ENCODE measurements at regions of chr20 and their contacts with region 1.

Region 1: DNA sequence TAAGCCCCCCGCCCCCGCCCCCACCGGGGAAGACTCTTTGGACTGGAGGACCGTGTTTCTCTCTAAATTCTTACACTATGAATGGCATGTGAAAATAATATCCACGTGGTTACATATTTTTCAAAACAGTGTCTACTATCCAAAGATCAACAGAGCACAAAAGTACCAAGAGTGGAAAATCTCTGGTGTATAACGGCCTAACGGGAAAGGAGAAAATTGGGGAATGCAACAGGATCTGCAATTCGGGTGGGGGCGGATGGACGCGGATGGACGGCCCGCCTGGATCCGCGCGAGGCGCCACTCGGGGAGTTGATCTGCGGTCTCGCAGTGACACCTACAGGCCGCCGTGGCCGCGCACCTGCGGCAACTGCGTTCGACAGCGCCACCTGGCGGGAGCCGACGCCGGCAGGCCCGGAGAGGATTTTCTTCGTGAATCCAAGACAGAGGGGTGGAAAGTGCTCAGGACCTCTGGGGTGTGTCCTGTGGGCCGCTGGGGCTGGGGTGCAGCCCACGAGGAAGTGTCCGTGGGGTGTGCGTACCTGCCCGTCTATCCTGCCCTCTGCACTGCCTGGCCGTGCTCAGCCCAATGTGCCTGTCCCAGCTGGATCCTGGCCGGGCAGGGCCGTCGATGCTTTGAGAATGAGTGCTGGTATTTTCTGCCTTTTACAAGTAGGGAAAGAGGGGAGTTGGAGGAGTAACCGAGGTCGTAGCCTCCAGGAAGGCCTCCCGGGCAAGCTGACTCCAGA is 18.6 kb downstream of the ANKRD60 start:
- DNase-seq: peak; percentile 60 to 99 (median 86)
- ATAC-seq: peak; percentile 88 to 99 (median 95)
- H3K4me3 ChIP-seq: no peak overlapping the region
- H3K27ac ChIP-seq: no peak overlapping the region
- H3K4me1 ChIP-seq: no peaks in the 10 kb centered on the region
- H3K27me3 ChIP-seq: no peaks in the 10 kb centered on the region
- CTCF ChIP-seq: peak; percentile 100

Region 2: DNA sequence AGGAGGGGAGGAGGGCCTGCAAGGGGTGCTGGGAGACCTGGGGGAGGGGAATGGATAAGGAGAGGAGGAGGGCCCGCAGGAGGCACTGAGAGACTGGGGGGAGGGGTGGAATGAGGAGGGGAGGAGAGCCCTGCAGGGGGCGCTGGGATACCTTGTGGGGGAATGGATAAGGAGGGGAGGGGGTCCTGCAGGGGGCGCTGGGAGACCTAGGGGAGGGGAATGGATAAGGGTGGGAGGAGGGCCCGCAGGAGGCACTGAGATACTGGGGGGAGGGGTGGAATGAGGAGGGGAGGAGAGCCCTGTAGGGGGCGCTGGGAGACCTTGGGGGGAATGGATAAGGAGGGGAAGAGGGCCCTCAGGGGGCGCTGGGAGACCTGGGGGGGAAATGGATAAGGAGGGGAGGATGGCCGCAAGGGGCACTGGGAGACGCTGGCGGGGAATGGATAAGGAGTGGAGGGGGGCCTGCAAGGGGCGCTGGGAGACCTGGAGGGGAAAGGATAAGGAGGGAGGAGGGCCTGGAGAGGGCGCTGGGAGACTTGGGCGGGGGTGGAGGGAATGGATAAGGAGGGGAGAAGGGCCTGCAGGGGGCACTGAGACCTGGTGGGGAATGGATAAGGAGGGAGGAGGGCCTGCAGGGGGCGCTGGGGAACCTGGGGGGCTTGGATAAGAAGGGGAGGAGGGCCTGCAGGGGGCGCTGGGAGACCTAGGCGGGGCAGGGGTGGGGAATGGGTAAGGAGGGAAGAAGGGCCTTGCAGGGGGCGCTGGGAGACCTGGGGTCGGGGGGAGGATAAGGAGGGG is 683.5 kb before region 1 on chr20:
- intact Hi-C with region 1: loop called in 2 of 3 experiments (anchors 10 kb)
- DNase-seq: peak in 1 of 6 donors; percentile 41
- ATAC-seq: no peak
- H3K4me3 ChIP-seq: no peak overlapping the region
- H3K27ac ChIP-seq: no peak overlapping the region
- H3K4me1 ChIP-seq: no peaks in the 10 kb centered on the region
- H3K27me3 ChIP-seq: no peaks in the 10 kb centered on the region
- CTCF ChIP-seq: no peak

Region 3: GRCh38 chr20:57596998-57597939 is 612.6 kb before region 1 on chr20:
- intact Hi-C with region 1: loop called in 2 of 3 experiments (anchors 5 kb)
- DNase-seq: peak in 5 of 6 donors; percentile 40 to 92 (median 61)
- ATAC-seq: peak; percentile 84 to 93 (median 88)
- H3K4me3 ChIP-seq: peak overlapping the region in 1 of 4 donors; percentile 20
- H3K27ac ChIP-seq: no peak overlapping the region
- H3K4me1 ChIP-seq: no peaks in the 10 kb centered on the region
- H3K27me3 ChIP-seq: no peaks in the 10 kb centered on the region
- CTCF ChIP-seq: peak; percentile 82 to 97 (median 94)